ENCODE measurements at regions of chr7 and their contacts with region 1.

Region 1: GRCh38 chr7:143380255-143380645 is 895 bp upstream of the ZYX start:
- DNase-seq: peak; percentile 80
- H3K4me3 Mint-ChIP-seq: peak overlapping the region; percentile 77
- H3K27ac Mint-ChIP-seq: peak overlapping the region; percentile 88
- H3K4me1 Mint-ChIP-seq: peaks cover 32% of the 10 kb centered on the region
- H3K27me3 Mint-ChIP-seq: no peaks in the 10 kb centered on the region
- CTCF ChIP-seq: peak; percentile 71

Region 2: DNA sequence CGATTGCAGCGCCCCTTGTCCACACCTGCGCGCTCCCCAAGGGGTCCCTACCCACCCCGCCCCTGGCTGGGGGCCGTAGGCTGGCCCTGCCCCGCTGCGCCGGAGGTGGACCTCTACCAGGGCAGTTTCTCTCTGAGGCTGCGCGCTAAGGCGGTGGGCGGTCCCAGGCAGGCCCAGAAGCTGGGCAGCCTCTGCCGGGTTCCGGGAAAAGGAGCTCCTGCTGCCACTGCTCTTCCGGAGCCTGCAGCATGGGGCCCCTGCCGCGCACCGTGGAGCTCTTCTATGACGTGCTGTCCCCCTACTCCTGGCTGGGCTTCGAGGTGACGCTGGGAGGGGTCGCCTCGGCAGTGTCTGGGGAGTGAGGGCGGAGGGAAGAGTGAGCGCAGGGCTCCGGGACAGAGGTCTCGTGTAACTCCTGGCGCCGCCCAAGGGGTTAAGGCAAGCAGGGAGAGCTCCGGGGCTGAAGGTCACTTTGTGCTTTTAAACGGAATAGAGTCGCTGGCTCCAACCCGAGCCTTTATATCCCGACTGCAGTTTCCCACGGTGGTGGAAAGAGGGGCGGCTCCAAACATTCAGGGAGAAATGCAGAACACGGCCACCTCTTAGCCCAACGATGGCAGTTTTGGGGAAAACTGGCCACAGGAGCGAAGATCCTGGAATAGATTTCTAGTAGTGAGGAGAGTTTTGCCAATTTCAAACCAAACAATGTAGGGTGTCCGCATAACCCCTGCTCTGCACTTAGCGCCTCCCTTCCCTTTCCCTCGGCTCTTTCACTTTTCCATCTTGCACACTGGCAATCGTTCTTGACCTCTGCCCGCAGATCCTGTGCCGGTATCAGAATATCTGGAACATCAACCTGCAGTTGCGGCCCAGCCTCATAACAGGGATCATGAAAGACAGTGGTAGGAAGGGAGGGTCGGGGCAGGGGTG is 116.7 kb before region 1 on chr7 and contains the start of gene GSTK1:
- CTCF ChIA-PET with region 1: interaction called, 14 read pairs
- POLR2A ChIA-PET with region 1: interaction called, 10 read pairs
- intact Hi-C with region 1: no loop called
- DNase-seq: peak; percentile 77
- H3K4me3 Mint-ChIP-seq: peak within 1 kb of the TSS; percentile 98
- H3K27ac Mint-ChIP-seq: peak within 1 kb of the TSS; percentile 92
- H3K4me1 Mint-ChIP-seq: peaks cover 29% of the 10 kb centered on the region
- H3K27me3 Mint-ChIP-seq: no peaks in the 10 kb centered on the region
- CTCF ChIP-seq: no peak
- total RNA-seq, gene GSTK1: 69.7 and 79.9 TPM in 2 replicates

Region 3: GRCh38 chr7:143321734-143322133 is 58.5 kb before region 1 on chr7:
- CTCF ChIA-PET with region 1: interaction called, 4 read pairs
- POLR2A ChIA-PET with region 1: interaction called, 7 read pairs
- intact Hi-C with region 1: loop called (anchors 2 kb)
- DNase-seq: peak; percentile 52
- H3K4me3 Mint-ChIP-seq: no peak overlapping the region
- H3K27ac Mint-ChIP-seq: no peak overlapping the region
- H3K4me1 Mint-ChIP-seq: peaks cover 26% of the 10 kb centered on the region
- H3K27me3 Mint-ChIP-seq: no peaks in the 10 kb centered on the region
- CTCF ChIP-seq: peak; percentile 34

Region 4: DNA sequence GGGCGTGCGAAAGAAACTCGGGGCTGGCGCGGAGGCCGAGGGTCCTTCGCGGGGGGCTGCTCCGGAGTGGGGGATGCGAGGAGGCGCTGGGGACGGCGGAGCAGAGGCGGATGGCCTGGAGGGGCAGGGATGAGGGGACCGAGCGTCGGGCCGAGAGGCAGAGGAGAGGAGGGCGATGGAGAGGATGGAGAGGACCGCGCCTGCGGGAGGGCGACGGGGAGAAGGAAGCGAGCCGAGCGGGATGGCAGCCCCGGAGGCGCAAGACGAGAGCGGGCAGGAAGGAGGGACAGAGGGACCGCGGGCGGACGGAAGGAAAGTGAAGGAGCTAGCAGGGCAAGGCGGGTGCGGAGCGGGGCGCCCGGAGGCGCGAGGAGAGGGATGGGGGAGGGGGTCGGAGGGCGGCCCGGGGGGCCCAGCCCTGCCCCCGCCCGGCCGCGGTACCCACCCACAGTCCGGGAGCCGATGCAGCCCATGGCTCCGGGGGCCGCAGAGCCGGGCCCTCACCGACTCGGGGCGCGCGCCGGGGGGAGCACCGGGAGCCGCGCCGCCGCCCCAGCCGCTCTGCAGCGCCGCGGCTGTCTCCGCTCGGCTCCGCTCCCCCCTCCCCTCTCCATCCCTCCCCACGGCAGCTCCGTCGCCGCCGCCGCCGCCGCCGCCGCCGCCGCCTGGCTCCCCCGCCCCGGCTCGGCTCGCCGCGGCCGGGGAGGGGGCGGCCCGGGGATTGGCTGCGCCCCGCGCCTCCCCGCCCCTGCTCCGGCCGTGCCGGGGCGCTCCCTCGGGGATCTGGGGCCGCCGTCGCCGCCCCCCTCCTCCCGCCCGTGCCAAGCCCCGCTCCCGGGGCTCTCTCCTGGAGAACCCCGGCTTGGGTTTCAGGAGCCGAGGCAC is 17.9 kb before region 1 on chr7 and contains the start of gene FAM131B:
- CTCF ChIA-PET with region 1: no interaction called
- POLR2A ChIA-PET with region 1: no interaction called
- intact Hi-C with region 1: no loop called
- DNase-seq: no peak
- H3K4me3 Mint-ChIP-seq: peak within 1 kb of the TSS; percentile 73
- H3K27ac Mint-ChIP-seq: no peak within 1 kb of the TSS
- H3K4me1 Mint-ChIP-seq: peaks cover under 1% of the 10 kb centered on the region
- H3K27me3 Mint-ChIP-seq: peaks cover 70% of the 10 kb centered on the region
- CTCF ChIP-seq: no peak
- total RNA-seq, gene FAM131B: 0.19 and 0.25 TPM in 2 replicates

Region 5: DNA sequence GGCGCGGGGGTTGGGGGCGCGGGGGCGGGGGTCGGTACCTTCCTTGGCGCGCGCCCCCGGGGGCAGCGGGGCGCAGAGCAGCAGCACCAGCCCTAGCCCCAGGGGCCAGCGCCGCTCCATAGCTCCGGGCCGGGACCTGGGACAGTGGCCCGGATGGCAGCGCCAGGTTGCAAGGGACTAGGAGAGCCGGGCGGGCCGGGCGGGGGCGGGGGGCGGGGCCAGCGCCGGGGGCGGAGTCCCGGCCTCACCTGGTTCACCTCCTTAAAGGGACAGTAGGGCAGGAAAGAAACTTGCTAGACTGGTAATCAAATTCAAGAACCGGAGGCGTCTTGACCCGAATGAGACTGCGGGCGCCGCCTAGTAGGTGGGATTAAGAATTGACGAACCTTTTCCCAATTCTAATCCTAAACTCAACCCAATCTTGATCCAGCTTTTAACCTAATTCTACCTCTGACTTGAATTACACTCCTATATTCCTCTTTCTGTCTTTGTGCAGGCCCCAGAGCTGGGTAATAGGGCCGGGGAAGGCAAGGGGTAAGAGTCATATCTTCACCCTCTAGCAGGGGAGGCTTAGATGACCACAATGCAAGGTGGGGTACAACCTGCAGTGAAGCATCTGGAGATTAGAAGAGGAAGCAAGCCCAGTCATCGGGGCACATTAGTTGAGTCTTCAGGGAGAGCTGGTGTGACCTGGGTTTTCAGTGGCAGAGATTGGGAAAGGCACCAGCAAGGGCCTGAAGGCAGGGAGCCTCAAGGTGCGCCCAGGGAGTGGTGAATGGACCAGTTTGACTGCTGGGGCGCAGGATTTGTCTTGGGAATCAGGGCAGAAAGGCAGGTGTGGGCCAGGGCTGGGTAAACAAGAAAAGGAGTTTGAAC is 28.7 kb after region 1 on chr7 and contains the start of gene EPHA1:
- CTCF ChIA-PET with region 1: interaction called, 13 read pairs
- POLR2A ChIA-PET with region 1: interaction called, 5 read pairs
- intact Hi-C with region 1: no loop called
- DNase-seq: peak; percentile 86
- H3K4me3 Mint-ChIP-seq: peak within 1 kb of the TSS; percentile 72
- H3K27ac Mint-ChIP-seq: peak within 1 kb of the TSS; percentile 63
- H3K4me1 Mint-ChIP-seq: peaks cover 13% of the 10 kb centered on the region
- H3K27me3 Mint-ChIP-seq: no peaks in the 10 kb centered on the region
- CTCF ChIP-seq: peak; percentile 35
- total RNA-seq, gene EPHA1: 0.89 and 1.2 TPM in 2 replicates

Region 6: GRCh38 chr7:143901668-143902331 is 521.5 kb after region 1 on chr7 and contains the start of gene TCAF1:
- CTCF ChIA-PET with region 1: no interaction called
- POLR2A ChIA-PET with region 1: no interaction called
- intact Hi-C with region 1: loop called (anchors 5 kb)
- DNase-seq: peak; percentile 96
- H3K4me3 Mint-ChIP-seq: peak within 1 kb of the TSS; percentile 95
- H3K27ac Mint-ChIP-seq: peak within 1 kb of the TSS; percentile 93
- H3K4me1 Mint-ChIP-seq: peaks cover 18% of the 10 kb centered on the region
- H3K27me3 Mint-ChIP-seq: no peaks in the 10 kb centered on the region
- CTCF ChIP-seq: peak; percentile 39
- total RNA-seq, gene TCAF1: 22.7 and 27.2 TPM in 2 replicates

Measured in MCF 10A (cell line).